ENCODE measurements at regions of chr13 and their contacts with region 1.

Region 1: DNA sequence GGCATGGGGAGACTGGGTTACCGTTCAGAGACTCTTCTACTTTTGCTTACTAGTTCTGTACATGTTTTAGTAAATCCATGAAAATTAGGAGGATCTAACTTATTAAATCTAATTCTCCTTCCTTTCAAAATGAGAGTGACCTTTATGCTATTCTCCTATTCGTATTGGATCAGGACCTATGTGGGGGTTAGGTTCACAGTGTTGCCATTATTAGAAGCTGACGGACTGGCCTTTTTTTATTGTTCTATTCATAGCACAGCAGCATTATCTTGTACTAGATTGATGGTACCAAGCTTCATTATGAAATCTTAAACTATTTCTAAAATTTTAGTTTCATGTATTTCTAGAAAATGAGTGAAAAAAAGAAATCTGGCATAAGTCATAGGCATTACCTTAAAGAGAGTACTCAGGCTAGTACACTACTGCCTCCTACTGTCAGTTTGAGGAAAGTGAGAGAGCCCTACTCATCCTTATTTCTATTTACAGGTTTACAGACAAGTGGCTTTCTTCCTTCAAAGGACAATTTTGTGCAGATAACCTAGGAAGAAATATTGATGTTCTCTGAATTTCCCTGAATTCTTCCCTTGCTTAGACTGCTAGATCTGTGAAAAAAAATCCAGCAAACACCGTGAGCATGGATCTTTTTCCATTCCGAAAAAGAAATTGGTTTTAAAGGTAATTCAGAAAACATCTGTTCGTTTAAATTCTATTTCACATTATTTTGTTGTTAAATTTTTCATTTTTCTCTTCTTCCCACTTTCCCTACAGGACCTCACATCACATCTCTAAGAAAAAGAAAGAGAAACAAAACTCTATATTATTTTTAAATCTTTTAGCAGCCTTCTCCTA is 485.5 kb downstream of the DIAPH3 start:
- DNase-seq: peak; percentile 84
- H3K4me3 ChIP-seq: no peak overlapping the region
- H3K27ac ChIP-seq: peak overlapping the region; percentile 88
- H3K4me1 ChIP-seq: peaks cover 77% of the 10 kb centered on the region
- H3K27me3 ChIP-seq: no peaks in the 10 kb centered on the region
- CTCF ChIP-seq: peak; percentile 90

Region 2: GRCh38 chr13:58960888-58961287 is 717.3 kb before region 1 on chr13:
- CTCF ChIA-PET with region 1: no interaction called
- POLR2A ChIA-PET with region 1: no interaction called
- intact Hi-C with region 1: loop called (anchors 10 kb)
- DNase-seq: peak; percentile 30
- H3K4me3 ChIP-seq: no peak overlapping the region
- H3K27ac ChIP-seq: no peak overlapping the region
- H3K4me1 ChIP-seq: no peaks in the 10 kb centered on the region
- H3K27me3 ChIP-seq: no peaks in the 10 kb centered on the region
- CTCF ChIP-seq: peak; percentile 55; the same call in 1 of the 2 replicates

Region 3: GRCh38 chr13:59391696-59392095 is 286.5 kb before region 1 on chr13:
- CTCF ChIA-PET with region 1: interaction called, 4 read pairs
- POLR2A ChIA-PET with region 1: no interaction called
- intact Hi-C with region 1: loop called (anchors 2 kb)
- DNase-seq: peak; percentile 91
- H3K4me3 ChIP-seq: no peak overlapping the region
- H3K27ac ChIP-seq: peak overlapping the region; percentile 58
- H3K4me1 ChIP-seq: peaks cover 23% of the 10 kb centered on the region
- H3K27me3 ChIP-seq: no peaks in the 10 kb centered on the region
- CTCF ChIP-seq: peak; percentile 93

Region 4: GRCh38 chr13:59542303-59542702 is 135.9 kb before region 1 on chr13:
- CTCF ChIA-PET with region 1: interaction called, 3 read pairs
- POLR2A ChIA-PET with region 1: no interaction called
- intact Hi-C with region 1: loop called (anchors 2 kb)
- DNase-seq: peak; percentile 95
- H3K4me3 ChIP-seq: no peak overlapping the region
- H3K27ac ChIP-seq: peak overlapping the region; percentile 92
- H3K4me1 ChIP-seq: peaks cover 53% of the 10 kb centered on the region
- H3K27me3 ChIP-seq: no peaks in the 10 kb centered on the region
- CTCF ChIP-seq: no peak

Region 5: DNA sequence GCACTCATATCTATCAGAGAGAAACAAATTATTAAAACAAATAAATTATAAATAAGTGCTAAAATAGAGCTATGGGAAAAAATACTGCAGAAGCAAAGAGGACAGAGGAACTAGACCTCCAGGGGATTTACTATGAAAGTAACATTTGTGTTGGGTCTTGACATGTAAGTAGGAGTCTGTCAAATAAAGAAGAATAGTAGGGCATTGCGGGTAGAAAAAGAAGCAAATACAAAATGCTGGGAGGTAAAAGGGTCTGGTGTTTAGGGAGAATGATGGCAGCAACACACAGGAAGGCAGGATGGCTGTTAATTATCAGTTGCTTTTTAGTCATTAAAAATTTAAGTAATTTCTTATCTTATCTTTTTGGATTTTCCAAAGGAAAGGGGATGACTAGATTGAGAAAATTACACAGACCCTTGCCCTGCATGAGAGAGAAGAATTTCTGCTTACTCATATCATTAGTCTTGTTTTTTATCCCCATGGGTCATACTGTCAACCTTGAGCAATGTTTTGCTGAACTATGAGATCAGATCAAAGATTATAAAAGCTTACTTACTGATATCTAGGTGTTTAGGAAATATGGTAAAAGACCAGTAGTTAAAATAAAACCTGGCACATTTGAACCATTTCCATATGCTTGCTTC is 12.8 kb after region 1 on chr13:
- CTCF ChIA-PET with region 1: no interaction called
- POLR2A ChIA-PET with region 1: no interaction called
- intact Hi-C with region 1: no loop called
- DNase-seq: no peak
- H3K4me3 ChIP-seq: no peak overlapping the region
- H3K27ac ChIP-seq: no peak overlapping the region
- H3K4me1 ChIP-seq: peaks cover 65% of the 10 kb centered on the region
- H3K27me3 ChIP-seq: no peaks in the 10 kb centered on the region
- CTCF ChIP-seq: no peak

Region 6: DNA sequence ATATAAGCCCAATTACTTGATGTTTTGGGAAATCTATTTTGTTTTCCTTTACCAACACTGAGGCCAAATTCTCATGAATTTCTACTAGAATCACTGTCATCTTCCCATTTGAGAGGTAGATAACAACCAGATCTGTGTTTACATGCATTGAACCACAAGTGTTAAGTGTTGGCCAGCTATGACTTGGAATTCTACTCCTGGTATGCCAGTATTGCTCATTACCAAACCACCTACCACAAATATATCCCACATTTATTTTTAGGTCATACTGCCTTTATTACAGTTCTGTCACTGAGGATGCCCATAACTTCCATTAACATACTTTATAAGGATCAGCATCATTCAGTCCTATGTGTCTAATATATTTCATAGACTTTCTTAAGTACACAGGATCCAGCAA is 156.6 kb after region 1 on chr13:
- CTCF ChIA-PET with region 1: no interaction called
- POLR2A ChIA-PET with region 1: no interaction called
- intact Hi-C with region 1: loop called (anchors 5 kb)
- DNase-seq: no peak
- H3K4me3 ChIP-seq: no peak overlapping the region
- H3K27ac ChIP-seq: peak overlapping the region; percentile 77
- H3K4me1 ChIP-seq: peaks cover 54% of the 10 kb centered on the region
- H3K27me3 ChIP-seq: no peaks in the 10 kb centered on the region
- CTCF ChIP-seq: no peak

Region 7: GRCh38 chr13:60329221-60329983 is 651.2 kb after region 1 on chr13:
- CTCF ChIA-PET with region 1: interaction called, 9 read pairs
- POLR2A ChIA-PET with region 1: no interaction called
- intact Hi-C with region 1: loop called (anchors 2 kb)
- DNase-seq: peak; percentile 93
- H3K4me3 ChIP-seq: no peak overlapping the region
- H3K27ac ChIP-seq: peak overlapping the region; percentile 91
- H3K4me1 ChIP-seq: peaks cover 58% of the 10 kb centered on the region
- H3K27me3 ChIP-seq: no peaks in the 10 kb centered on the region
- CTCF ChIP-seq: peak; percentile 84